Activated T-helper 2 cell treated with anti-CD3 and anti-CD28 coated beads, Interferon-gamma antibody, Interleukin-2, Interleukin-4, amounts not matched to agents 10 μg/mL and 5 μg/mL and 100 μg/mL, durations not matched to agents 14 hours and 24 hours and 36 hours (primary cell): ENCODE measurements at regions of chr7 and their contacts with region 1.

Region 1: GRCh38 chr7:131231381-131232220 is 96.1 kb upstream of the MKLN1 start:
- DNase-seq: peak; percentile 63
- H3K4me3 Mint-ChIP-seq: peak overlapping the region; percentile 59
- H3K27ac Mint-ChIP-seq: peak overlapping the region; percentile 83
- H3K4me1 Mint-ChIP-seq: peaks cover 58% of the 10 kb centered on the region
- H3K27me3 Mint-ChIP-seq: no peaks in the 10 kb centered on the region

Region 2: DNA sequence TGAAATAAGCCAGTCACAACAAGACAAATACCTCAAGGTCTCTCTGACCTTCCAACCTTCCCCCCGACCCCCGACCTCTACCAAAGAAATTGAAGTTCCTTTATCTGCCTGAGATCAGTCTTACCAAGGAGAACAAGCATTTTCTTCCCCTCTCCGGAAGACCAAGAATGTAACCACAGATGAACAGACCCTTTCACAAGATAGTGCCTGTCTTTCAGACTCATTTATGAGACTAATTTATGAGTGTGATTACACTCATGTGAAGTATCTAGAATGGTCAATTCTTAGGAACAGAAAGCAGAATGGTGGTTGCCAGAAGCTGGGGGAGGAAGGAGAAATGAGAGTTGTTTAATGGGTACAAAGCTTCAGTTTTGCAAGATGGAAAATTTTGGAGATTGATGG is 12.9 kb before region 1 on chr7:
- intact Hi-C with region 1: loop called (anchors 1 kb)
- DNase-seq: no peak
- H3K4me3 Mint-ChIP-seq: no peak overlapping the region
- H3K27ac Mint-ChIP-seq: no peak overlapping the region
- H3K4me1 Mint-ChIP-seq: peaks cover 20% of the 10 kb centered on the region
- H3K27me3 Mint-ChIP-seq: no peaks in the 10 kb centered on the region

Region 3: DNA sequence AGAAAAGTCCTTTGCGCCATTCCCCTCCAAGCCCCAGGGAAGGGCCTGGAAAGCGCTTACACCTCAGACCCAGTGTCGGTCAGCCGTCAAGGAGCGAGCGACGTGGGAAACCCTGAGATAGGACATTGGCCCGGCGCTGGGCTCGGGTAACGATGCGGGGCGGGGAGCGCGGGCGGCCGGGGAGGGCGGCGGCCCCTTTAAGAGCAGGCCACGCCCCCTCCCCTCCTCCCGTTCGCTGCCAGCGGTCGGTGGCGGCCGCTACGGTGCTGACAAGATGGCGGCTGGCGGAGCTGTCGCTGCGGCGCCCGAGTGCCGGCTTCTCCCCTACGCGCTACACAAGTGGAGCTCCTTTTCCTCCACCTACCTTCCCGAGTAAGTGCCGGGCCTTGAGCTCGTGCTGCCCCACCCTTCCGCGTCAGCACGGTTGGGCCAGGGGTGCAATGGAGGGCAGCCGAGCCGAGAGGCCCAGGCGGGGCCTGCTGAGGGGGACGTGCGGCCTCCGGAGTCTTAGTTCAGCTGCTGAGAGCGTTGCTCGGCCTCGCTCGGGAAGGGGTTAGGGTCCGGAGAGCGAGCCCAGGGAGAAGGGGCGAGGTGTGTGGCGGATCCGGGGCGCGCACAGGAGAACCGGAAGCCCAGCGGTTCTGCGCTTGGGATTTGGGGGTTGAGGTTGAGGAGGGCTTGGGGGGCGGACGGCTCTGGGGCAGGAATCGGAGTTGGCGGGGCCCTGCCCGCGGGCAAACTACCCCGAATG is 96.2 kb after region 1 on chr7 and contains the start of gene MKLN1:
- intact Hi-C with region 1: loop called (anchors 5 kb)
- DNase-seq: peak; percentile 85
- H3K4me3 Mint-ChIP-seq: peak within 1 kb of the TSS; percentile 94
- H3K27ac Mint-ChIP-seq: peak within 1 kb of the TSS; percentile 95
- H3K4me1 Mint-ChIP-seq: peaks cover 48% of the 10 kb centered on the region
- H3K27me3 Mint-ChIP-seq: no peaks in the 10 kb centered on the region
- total RNA-seq, gene MKLN1: 38.3 and 40.9 TPM in 2 replicates

Region 4: DNA sequence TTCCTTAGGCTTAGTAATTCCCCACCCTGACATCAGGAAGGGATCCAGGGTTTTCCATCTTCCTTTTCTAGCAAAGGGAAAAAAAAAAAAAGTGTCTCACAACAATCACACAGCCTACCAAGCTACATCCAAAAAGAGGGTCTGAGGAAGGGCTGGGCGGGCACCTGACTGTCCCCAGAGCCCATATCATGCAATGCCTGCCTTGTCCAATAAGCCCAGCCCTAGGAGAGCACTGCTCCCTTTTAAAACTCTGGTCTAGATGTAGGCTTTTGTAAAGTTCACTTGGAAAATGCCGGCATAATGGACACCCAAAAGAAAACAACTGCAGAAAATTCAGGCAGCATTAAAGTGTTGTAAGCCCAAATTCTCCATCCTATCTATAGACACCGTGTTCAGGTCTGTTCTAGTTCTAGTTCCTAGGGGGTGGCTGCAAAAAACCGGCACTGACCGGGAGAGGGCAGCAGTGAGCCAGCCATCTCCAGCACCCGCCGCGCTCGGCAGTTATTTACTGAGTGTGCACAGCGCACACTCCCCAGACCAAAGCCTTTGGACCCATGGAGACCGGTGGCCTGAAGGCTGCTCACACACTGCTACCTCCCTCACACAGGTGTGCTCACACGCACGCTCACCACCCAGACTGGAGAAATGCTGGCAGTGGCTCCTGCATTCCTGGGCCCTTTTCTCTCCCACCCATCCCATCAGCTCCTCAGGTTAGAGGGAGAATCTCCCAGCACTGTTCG is 276.2 kb after region 1 on chr7:
- intact Hi-C with region 1: loop called (anchors 10 kb)
- DNase-seq: peak; percentile 67
- H3K4me3 Mint-ChIP-seq: no peak overlapping the region
- H3K27ac Mint-ChIP-seq: no peak overlapping the region
- H3K4me1 Mint-ChIP-seq: peaks cover 17% of the 10 kb centered on the region
- H3K27me3 Mint-ChIP-seq: peaks cover 3% of the 10 kb centered on the region